Endothelial cell of umbilical vein (primary cell): ENCODE measurements at regions of chr6 and their contacts with region 1.

Region 1: GRCh38 chr6:147506704-147507114 is 1.8 kb upstream of the SAMD5 start:
- DNase-seq: peak; percentile 57
- H3K4me3 ChIP-seq: peak overlapping the region; percentile 76 to 96 (median 87)
- H3K27ac ChIP-seq: peak overlapping the region; percentile 7
- H3K4me1 ChIP-seq: peaks cover 26% of the 10 kb centered on the region
- H3K27me3 ChIP-seq: no peaks in the 10 kb centered on the region
- CTCF ChIP-seq: peak; percentile 78 to 85
- POLR2A ChIP-seq: no peak

Region 2: DNA sequence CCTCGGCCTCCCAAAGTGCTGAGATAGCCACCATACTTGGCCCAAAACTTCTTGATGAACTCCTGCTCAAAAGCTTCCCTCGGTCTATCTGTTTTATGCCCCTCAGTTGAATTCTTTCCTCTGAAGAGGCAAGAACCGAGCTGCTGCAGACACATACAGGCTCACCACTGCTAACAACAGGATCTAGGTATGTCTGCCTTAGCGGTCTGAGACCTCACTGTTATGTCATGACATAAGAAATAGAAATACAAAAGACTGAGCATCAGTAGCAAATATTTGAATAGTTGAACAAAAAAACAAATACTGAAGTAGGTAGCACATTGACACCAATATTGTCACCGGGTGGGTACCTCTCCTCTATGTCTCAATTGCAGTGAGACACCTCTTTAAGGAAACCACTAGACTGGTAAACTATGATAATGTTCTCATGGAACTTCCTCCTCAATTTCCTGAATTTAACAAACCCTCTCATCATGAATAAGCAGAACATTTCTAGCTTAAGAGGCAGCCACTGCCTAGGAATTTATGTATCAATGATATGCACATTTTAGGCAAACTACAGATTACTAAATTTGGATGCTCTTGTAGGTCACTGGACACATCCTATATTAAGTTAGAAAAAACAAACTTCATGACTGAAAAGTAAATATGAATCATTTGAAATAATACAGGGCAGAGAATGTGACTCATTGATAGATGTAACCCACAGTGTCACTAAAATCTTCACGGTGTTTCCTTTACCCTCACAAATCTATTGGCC is 311.9 kb before region 1 on chr6:
- CTCF ChIA-PET with region 1: no interaction called
- POLR2A ChIA-PET with region 1: no interaction called
- dilution Hi-C with region 1: no loop called
- intact Hi-C with region 1: no loop called
- DNase-seq: peak; percentile 22
- H3K4me3 ChIP-seq: no peak overlapping the region
- H3K27ac ChIP-seq: no peak overlapping the region
- H3K4me1 ChIP-seq: peaks cover 11% of the 10 kb centered on the region
- H3K27me3 ChIP-seq: no peaks in the 10 kb centered on the region
- CTCF ChIP-seq: no peak
- POLR2A ChIP-seq: no peak

Region 3: DNA sequence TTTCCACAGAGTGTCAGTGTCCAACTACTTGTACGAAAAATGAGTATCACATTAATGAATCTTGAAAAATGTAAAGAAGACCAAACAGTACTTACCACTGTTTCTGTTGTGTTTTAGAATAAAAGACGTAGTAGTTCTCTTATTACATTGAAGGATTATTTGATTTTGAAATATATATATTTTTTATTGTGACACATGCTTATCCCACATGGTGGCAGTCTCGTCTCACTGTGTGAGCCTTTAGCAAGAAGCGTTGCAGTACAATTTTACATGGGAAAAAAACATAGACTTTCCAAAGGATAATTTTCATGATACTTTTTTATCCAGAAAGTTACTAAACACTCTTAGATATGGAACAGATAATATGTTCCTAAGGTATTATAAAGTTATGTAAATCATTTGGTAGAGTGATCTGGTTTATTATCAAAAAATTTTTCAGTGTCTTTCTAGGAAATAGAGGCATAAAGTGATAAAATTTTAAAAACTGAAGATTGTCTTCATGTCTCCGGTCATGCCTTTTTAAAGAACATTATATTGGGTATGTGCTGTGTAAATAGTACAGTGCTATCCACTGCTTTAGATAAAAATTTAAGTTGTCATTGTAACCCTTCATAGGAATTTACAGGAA is 115.7 kb before region 1 on chr6:
- CTCF ChIA-PET with region 1: interaction called, 5 read pairs
- POLR2A ChIA-PET with region 1: no interaction called
- dilution Hi-C with region 1: no loop called
- intact Hi-C with region 1: loop called (anchors 2 kb)
- DNase-seq: peak; percentile 52
- H3K4me3 ChIP-seq: no peak overlapping the region
- H3K27ac ChIP-seq: no peak overlapping the region
- H3K4me1 ChIP-seq: no peaks in the 10 kb centered on the region
- H3K27me3 ChIP-seq: no peaks in the 10 kb centered on the region
- CTCF ChIP-seq: peak; percentile 16 to 17
- POLR2A ChIP-seq: no peak

Region 4: DNA sequence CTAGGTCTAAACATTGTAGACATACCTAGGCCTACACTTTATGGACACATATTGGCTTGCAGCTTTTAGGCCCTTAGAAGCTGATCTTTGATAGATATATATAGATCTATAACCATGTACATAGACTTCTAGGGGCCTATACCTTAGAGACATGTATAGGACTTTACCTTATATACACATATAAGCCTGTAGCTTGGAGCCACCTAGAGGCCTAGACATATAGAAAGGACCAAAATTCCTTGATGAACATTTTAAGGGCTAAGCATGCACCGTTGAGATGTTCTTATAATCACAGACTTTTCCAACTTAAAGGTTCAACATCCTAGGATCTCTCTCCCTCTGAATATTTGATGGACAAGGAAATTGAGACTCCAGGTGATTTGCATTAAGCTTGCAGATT is 464.3 kb after region 1 on chr6:
- CTCF ChIA-PET with region 1: interaction called, 9 read pairs
- POLR2A ChIA-PET with region 1: no interaction called
- dilution Hi-C with region 1: no loop called
- intact Hi-C with region 1: loop called (anchors 1 kb)
- DNase-seq: peak; percentile 14
- H3K4me3 ChIP-seq: no peak overlapping the region
- H3K27ac ChIP-seq: no peak overlapping the region
- H3K4me1 ChIP-seq: no peaks in the 10 kb centered on the region
- H3K27me3 ChIP-seq: no peaks in the 10 kb centered on the region
- CTCF ChIP-seq: peak in 1 of 2 donors; percentile 20
- POLR2A ChIP-seq: no peak

Region 5: DNA sequence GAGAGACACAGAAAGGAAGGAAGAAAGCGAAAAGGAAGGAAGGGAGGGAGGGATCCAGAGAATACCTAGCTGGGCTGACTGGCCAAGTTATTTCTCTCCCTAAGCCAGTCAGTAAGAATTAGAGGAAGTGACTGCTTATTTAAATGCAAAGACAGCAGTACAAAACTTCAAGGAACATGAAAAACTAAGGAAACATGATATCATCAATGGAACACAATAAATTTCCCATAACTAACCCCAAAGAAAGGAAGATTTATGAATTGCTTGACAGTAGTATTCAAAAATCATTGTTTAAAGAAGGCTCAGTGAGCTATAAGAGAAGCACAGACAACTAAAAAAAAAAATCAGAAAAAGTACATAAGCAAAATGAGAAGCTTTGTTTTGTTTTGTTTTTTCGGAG is 583.6 kb after region 1 on chr6:
- CTCF ChIA-PET with region 1: interaction called, 4 read pairs
- POLR2A ChIA-PET with region 1: no interaction called
- dilution Hi-C with region 1: no loop called
- intact Hi-C with region 1: loop called (anchors 1 kb)
- DNase-seq: peak; percentile 85
- H3K4me3 ChIP-seq: no peak overlapping the region
- H3K27ac ChIP-seq: peak overlapping the region; percentile 55
- H3K4me1 ChIP-seq: peaks cover 13% of the 10 kb centered on the region
- H3K27me3 ChIP-seq: no peaks in the 10 kb centered on the region
- CTCF ChIP-seq: no peak
- POLR2A ChIP-seq: no peak

Region 6: DNA sequence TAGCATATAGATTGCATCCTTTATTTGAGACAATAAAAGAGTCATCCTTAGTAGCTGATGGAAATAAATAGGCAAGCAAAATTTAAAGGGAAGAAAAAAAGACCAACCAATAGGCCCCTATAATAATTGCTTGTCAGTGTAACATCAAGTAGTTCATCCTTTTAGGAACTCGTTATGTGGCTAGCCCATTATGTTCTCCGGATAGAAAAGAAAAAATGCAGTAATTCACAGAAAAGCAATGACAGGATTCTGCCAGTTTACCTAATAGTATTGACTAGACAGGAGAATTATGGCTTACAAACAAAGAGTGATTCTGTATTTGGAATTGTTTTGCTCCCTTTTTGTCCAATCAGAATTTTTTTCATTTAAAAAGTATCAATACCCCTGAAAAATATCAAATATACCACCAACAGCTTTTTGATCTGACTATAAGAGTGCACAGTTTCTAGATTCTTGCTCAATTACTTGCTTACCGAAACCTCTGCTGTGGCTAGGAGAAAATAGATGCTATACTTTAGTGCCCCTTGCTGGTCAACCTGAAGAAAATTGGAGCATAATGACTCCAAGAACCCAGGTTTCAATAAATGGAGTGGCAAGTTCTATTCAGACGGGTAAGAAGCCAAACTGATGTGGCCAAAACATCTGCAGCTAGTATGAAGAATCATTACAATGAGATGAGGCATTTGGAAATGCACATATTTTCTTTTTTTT is 744.4 kb after region 1 on chr6:
- CTCF ChIA-PET with region 1: interaction called, 6 read pairs
- POLR2A ChIA-PET with region 1: no interaction called
- dilution Hi-C with region 1: no loop called
- intact Hi-C with region 1: loop called (anchors 5 kb)
- DNase-seq: peak; percentile 42
- H3K4me3 ChIP-seq: no peak overlapping the region
- H3K27ac ChIP-seq: no peak overlapping the region
- H3K4me1 ChIP-seq: no peaks in the 10 kb centered on the region
- H3K27me3 ChIP-seq: no peaks in the 10 kb centered on the region
- CTCF ChIP-seq: peak in 1 of 2 donors; percentile 16
- POLR2A ChIP-seq: no peak

Region 7: DNA sequence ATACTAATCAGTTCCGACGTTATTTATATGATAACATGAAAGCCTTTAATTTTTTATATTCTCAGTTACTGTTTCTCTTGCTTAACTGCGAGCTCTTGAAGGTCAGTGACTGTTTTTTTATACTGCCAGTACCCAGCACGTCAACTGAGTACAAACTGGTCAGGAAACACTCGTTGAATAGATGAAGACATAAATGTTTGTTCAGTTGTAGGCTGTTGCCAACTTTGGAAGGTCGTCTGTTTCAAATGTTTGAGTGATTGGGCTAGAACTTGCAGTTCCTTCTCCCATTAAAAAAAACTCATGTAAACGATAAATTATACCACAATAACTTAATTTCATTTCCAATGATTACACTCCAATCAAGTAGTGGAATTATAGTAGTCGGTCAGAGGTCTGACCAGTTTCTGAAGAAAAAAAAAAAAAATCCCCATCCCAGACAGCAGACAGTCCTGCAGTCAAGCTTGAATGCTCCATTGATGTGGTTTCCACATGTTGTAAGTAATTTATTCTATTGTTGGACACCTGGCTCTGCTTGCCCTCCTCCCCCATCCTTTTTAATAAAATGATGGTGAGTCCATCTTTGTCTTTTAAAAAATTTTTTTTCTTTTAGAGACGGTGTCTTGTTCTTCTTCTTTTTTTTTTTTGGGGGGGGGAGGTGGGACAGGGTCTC is 917.0 kb after region 1 on chr6:
- CTCF ChIA-PET with region 1: no interaction called
- POLR2A ChIA-PET with region 1: no interaction called
- dilution Hi-C with region 1: no loop called
- intact Hi-C with region 1: loop called (anchors 5 kb)
- DNase-seq: peak; percentile 96
- H3K4me3 ChIP-seq: no peak overlapping the region
- H3K27ac ChIP-seq: peak overlapping the region; percentile 75
- H3K4me1 ChIP-seq: peaks cover 69% of the 10 kb centered on the region
- H3K27me3 ChIP-seq: no peaks in the 10 kb centered on the region
- CTCF ChIP-seq: no peak
- POLR2A ChIP-seq: peak; percentile 54

Region 8: GRCh38 chr6:148947621-148948444 is 1441.1 kb after region 1 on chr6:
- CTCF ChIA-PET with region 1: no interaction called
- POLR2A ChIA-PET with region 1: no interaction called
- dilution Hi-C with region 1: no loop called
- intact Hi-C with region 1: loop called (anchors 1 kb)
- DNase-seq: peak; percentile 77
- H3K4me3 ChIP-seq: no peak overlapping the region
- H3K27ac ChIP-seq: no peak overlapping the region
- H3K4me1 ChIP-seq: no peaks in the 10 kb centered on the region
- H3K27me3 ChIP-seq: no peaks in the 10 kb centered on the region
- CTCF ChIP-seq: peak; percentile 85 to 90
- POLR2A ChIP-seq: no peak